ENCODE measurements at regions of chr1 and their contacts with region 1.

Region 1: GRCh38 chr1:243508303-243508713 is 252.5 kb downstream of the SDCCAG8 start:
- DNase-seq: peak; percentile 37
- ATAC-seq: peak; percentile 84
- H3K4me3 Mint-ChIP-seq: peak overlapping the region; percentile 72
- H3K27ac Mint-ChIP-seq: peak overlapping the region; percentile 73
- H3K4me1 Mint-ChIP-seq: peaks cover 46% of the 10 kb centered on the region
- H3K27me3 Mint-ChIP-seq: no peaks in the 10 kb centered on the region
- CTCF ChIP-seq: no peak

Region 2: GRCh38 chr1:243267914-243268653 is 240.2 kb before region 1 on chr1:
- CTCF ChIA-PET with region 1: no interaction called
- POLR2A ChIA-PET with region 1: interaction called, 13 read pairs
- intact Hi-C with region 1: no loop called
- DNase-seq: no peak
- ATAC-seq: peak; percentile 51
- H3K4me3 Mint-ChIP-seq: peak overlapping the region; percentile 63
- H3K27ac Mint-ChIP-seq: peak overlapping the region; percentile 47
- H3K4me1 Mint-ChIP-seq: peaks cover 46% of the 10 kb centered on the region
- H3K27me3 Mint-ChIP-seq: no peaks in the 10 kb centered on the region
- CTCF ChIP-seq: no peak

Region 3: GRCh38 chr1:243343970-243344937 is 164.1 kb before region 1 on chr1:
- CTCF ChIA-PET with region 1: no interaction called
- POLR2A ChIA-PET with region 1: no interaction called
- intact Hi-C with region 1: no loop called
- DNase-seq: no peak
- ATAC-seq: no peak
- H3K4me3 Mint-ChIP-seq: no peak overlapping the region
- H3K27ac Mint-ChIP-seq: no peak overlapping the region
- H3K4me1 Mint-ChIP-seq: no peaks in the 10 kb centered on the region
- H3K27me3 Mint-ChIP-seq: no peaks in the 10 kb centered on the region
- CTCF ChIP-seq: peak; percentile 88

Region 4: GRCh38 chr1:243482141-243483022 is 25.9 kb before region 1 on chr1:
- CTCF ChIA-PET with region 1: no interaction called
- POLR2A ChIA-PET with region 1: no interaction called
- intact Hi-C with region 1: loop called (anchors 2 kb)
- DNase-seq: no peak
- ATAC-seq: peak; percentile 31
- H3K4me3 Mint-ChIP-seq: peak overlapping the region; percentile 75
- H3K27ac Mint-ChIP-seq: no peak overlapping the region
- H3K4me1 Mint-ChIP-seq: peaks cover 14% of the 10 kb centered on the region
- H3K27me3 Mint-ChIP-seq: no peaks in the 10 kb centered on the region
- CTCF ChIP-seq: no peak

Region 5: GRCh38 chr1:243596431-243597062 is 88.2 kb after region 1 on chr1:
- CTCF ChIA-PET with region 1: no interaction called
- POLR2A ChIA-PET with region 1: no interaction called
- intact Hi-C with region 1: loop called (anchors 5 kb)
- DNase-seq: no peak
- ATAC-seq: peak; percentile 76
- H3K4me3 Mint-ChIP-seq: no peak overlapping the region
- H3K27ac Mint-ChIP-seq: peak overlapping the region; percentile 32
- H3K4me1 Mint-ChIP-seq: peaks cover 21% of the 10 kb centered on the region
- H3K27me3 Mint-ChIP-seq: no peaks in the 10 kb centered on the region
- CTCF ChIP-seq: no peak